Tibial artery (tissue), 4 donors: ENCODE measurements at regions of chr17 and their contacts with region 1.

Region 1: DNA sequence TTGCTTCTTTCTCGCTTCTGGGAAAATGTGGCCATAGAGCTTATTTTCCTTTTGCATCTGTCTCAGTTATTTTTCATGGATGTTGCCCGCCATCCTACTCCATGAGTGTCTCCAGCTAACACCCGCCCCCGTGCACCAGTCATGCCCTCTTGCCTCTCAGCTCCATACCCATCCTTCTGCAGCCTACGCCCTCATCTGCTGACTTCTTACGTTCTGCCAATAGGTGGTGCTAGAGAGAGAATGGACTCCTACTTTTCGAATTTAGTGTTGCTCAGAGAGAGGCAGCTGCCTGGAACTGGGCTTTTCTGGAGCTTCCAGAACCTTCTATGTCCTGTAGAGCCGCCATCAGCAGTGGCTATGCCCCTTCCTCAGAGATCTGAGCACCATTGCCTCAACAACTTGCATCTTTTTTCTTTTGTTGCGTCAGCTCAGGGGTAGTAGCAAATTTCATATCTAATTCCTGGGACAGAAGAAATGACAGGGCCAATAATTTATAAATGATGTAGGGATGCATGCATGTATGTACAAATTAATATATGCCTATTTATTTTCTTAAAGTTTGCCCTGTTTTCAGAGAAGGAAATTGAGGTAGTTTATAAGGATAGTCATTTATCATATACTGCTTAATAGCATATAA is 119.7 kb upstream of the MYOCD start:
- DNase-seq: peak; percentile 31 to 68
- H3K4me3 ChIP-seq: no peak overlapping the region
- H3K27ac ChIP-seq: no peak overlapping the region
- H3K4me1 ChIP-seq: peaks cover 0 to 35% (median 5%) of the 10 kb centered on the region in 4 donors
- H3K27me3 ChIP-seq: no peaks in the 10 kb centered on the region
- CTCF ChIP-seq: peak; percentile 75 to 81

Region 2: DNA sequence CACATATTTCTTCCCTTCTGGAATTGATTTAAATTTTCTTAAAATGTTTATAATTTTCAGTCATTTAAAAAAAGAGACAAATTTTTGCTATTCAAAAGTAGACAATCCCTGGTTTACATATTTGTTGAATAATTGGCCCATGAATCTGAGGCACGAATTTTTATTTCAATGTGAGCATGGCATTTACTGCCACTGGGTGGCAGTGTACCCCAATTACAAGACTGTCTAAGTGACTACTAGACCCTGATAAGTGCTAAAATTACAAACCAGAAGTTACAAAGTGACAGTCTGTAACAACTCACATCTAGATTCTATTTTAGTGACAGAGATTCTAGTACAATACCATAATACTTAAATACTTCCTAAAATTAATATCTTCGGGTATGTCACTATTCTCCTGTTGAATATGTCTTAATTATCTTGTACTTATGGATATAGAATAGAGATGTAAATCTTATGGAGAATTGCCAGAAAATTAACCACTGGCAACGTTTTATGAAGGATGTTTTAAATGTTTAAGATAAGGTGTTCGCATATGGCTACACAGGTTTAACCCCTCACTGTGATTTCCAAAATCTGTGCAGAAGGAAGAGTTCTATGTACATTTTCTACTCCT is 289.5 kb before region 1 on chr17:
- intact Hi-C with region 1: loop called (anchors 5 kb)
- DNase-seq: peak in 1 of 2 donors; percentile 39
- H3K4me3 ChIP-seq: no peak overlapping the region
- H3K27ac ChIP-seq: no peak overlapping the region
- H3K4me1 ChIP-seq: peaks cover 0 to 14% (median 0%) of the 10 kb centered on the region in 4 donors
- H3K27me3 ChIP-seq: no peaks in the 10 kb centered on the region
- CTCF ChIP-seq: peak; percentile 81 to 85

Region 3: GRCh38 chr17:12301551-12301950 is 244.4 kb before region 1 on chr17:
- intact Hi-C with region 1: no loop called
- DNase-seq: no peak
- H3K4me3 ChIP-seq: peak overlapping the region; percentile 15
- H3K27ac ChIP-seq: peak overlapping the region; percentile 76 to 77
- H3K4me1 ChIP-seq: peaks cover 0 to 35% (median 9%) of the 10 kb centered on the region in 4 donors
- H3K27me3 ChIP-seq: no peaks in the 10 kb centered on the region
- CTCF ChIP-seq: no peak

Region 4: GRCh38 chr17:12365805-12366204 is 180.2 kb before region 1 on chr17:
- intact Hi-C with region 1: loop called (anchors 10 kb)
- DNase-seq: peak; percentile 65 to 92
- H3K4me3 ChIP-seq: no peak overlapping the region
- H3K27ac ChIP-seq: peak overlapping the region; percentile 73 to 76
- H3K4me1 ChIP-seq: peaks cover 0 to 67% (median 9%) of the 10 kb centered on the region in 4 donors
- H3K27me3 ChIP-seq: no peaks in the 10 kb centered on the region
- CTCF ChIP-seq: no peak

Region 5: GRCh38 chr17:12627177-12627629 is 81.2 kb after region 1 on chr17:
- intact Hi-C with region 1: loop called (anchors 5 kb)
- DNase-seq: peak; percentile 82 to 94
- H3K4me3 ChIP-seq: peak overlapping the region; percentile 33 to 38
- H3K27ac ChIP-seq: peak overlapping the region; percentile 90 to 91
- H3K4me1 ChIP-seq: peaks cover 0 to 57% (median 16%) of the 10 kb centered on the region in 4 donors
- H3K27me3 ChIP-seq: no peaks in the 10 kb centered on the region
- CTCF ChIP-seq: no peak

Region 6: GRCh38 chr17:12667299-12667958 is 121.4 kb after region 1 on chr17:
- intact Hi-C with region 1: loop called (anchors 5 kb)
- DNase-seq: no peak
- H3K4me3 ChIP-seq: peak overlapping the region; percentile 74 to 85
- H3K27ac ChIP-seq: peak overlapping the region; percentile 91 to 97
- H3K4me1 ChIP-seq: peaks cover 0 to 63% (median 16%) of the 10 kb centered on the region in 4 donors
- H3K27me3 ChIP-seq: no peaks in the 10 kb centered on the region
- CTCF ChIP-seq: peak; percentile 55 to 61

Region 7: GRCh38 chr17:12815642-12816141 is 269.7 kb after region 1 on chr17:
- intact Hi-C with region 1: no loop called
- DNase-seq: no peak
- H3K4me3 ChIP-seq: no peak overlapping the region
- H3K27ac ChIP-seq: no peak overlapping the region
- H3K4me1 ChIP-seq: no peaks in the 10 kb centered on the region
- H3K27me3 ChIP-seq: no peaks in the 10 kb centered on the region
- CTCF ChIP-seq: no peak

Region 8: GRCh38 chr17:13002766-13003451 is 456.9 kb after region 1 on chr17:
- intact Hi-C with region 1: loop called (anchors 5 kb)
- DNase-seq: peak; percentile 85 to 86
- H3K4me3 ChIP-seq: no peak overlapping the region
- H3K27ac ChIP-seq: no peak overlapping the region
- H3K4me1 ChIP-seq: no peaks in the 10 kb centered on the region
- H3K27me3 ChIP-seq: no peaks in the 10 kb centered on the region
- CTCF ChIP-seq: peak; percentile 80 to 83